ENCODE measurements at regions of chr2 and their contacts with region 1.

Region 1: DNA sequence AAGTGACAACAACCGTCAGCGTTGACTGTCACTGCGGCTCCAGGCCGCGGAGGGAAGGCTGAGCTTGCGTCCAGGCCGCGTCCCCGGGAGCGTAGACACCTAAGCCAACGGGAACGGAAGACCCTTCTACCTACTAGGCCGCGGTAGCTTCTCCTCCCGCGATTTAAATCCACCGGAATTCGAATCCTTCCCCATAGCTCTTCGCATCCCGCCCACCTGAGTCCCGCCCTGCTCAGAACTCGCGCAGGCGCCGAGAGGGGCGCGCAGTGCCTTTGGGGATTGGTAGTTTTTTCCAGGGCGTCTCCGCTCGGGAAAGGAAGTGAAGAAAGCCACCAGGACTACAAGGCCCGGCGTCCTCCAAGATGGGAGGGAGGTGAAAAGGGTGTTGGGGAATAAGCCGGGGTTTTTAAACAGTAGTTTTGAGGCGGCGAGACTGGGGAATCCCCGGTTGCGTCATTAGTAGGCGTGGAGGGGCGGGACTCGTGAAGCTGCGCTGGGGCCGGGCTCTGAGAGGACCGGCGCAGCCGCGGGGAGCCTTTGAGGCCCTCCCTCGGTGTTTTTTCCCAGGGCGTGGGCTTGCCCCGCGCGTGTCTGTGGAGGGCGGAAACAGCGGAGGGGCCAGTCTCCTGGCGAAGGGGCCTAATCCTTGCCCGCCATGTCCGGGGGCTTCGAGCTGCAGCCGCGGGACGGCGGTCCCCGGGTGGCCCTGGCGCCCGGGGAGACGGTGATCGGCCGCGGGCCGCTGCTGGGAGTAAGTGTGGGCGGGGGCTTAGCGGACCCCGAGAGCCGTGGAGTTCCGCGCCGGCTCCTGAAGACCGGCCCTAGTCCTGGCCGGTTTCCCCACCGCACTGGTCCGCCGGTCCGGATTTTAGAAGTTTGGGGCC is at the starts of genes APLF and FBXO48:
- DNase-seq: peak; percentile 99
- ATAC-seq: peak; percentile 93
- H3K4me3 Mint-ChIP-seq: peak within 1 kb of the TSS; percentile 93
- H3K27ac Mint-ChIP-seq: peak within 1 kb of the TSS; percentile 93
- H3K4me1 Mint-ChIP-seq: peaks cover 45% of the 10 kb centered on the region
- H3K27me3 Mint-ChIP-seq: no peaks in the 10 kb centered on the region
- total RNA-seq, gene APLF: 2.5 to 4.3 TPM
- total RNA-seq, gene FBXO48: 2.0 to 2.4 TPM

Region 2: GRCh38 chr2:68157402-68158133 is 309.8 kb before region 1 on chr2 and contains the start of gene PNO1:
- CTCF ChIA-PET with region 1: no interaction called
- POLR2A ChIA-PET with region 1: no interaction called
- intact Hi-C with region 1: loop called in 1 of 2 experiments (anchors 1 kb)
- DNase-seq: peak; percentile 98
- ATAC-seq: peak; percentile 93
- H3K4me3 Mint-ChIP-seq: peak within 1 kb of the TSS; percentile 97
- H3K27ac Mint-ChIP-seq: peak within 1 kb of the TSS; percentile 100
- H3K4me1 Mint-ChIP-seq: peaks cover 51% of the 10 kb centered on the region
- H3K27me3 Mint-ChIP-seq: no peaks in the 10 kb centered on the region
- total RNA-seq, gene PNO1: 15.7 to 20.5 TPM

Region 3: DNA sequence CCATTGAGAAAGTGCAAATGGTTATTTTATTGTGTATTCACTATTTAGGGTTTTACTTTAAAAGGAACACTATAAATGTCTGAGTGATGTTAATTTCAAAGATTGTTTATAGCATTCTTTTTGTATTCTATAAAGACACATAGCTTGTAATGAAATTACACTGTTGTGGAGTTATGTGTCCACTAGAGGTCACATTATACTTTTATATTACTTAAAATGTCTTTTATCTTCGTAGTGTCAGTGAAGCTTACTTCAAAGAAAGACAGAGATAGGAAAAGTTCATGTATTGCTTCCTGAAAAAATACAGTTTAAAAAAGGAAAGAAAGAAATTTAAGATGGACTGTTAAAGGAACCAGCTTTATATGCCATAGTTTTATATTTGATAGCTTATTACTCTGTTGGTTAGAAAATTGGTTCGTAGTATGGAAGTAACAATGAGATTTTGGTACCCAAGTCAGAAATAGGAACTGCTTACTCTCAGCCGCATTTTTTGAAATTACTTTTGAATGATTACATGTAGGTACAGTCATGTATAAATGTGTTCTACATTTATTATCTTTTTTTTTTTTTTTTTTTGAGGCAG is 20.5 kb after region 1 on chr2:
- CTCF ChIA-PET with region 1: interaction called, 37 read pairs
- POLR2A ChIA-PET with region 1: no interaction called
- intact Hi-C with region 1: loop called in 1 of 2 experiments (anchors 2 kb)
- DNase-seq: no peak
- ATAC-seq: no peak
- H3K4me3 Mint-ChIP-seq: no peak overlapping the region
- H3K27ac Mint-ChIP-seq: no peak overlapping the region
- H3K4me1 Mint-ChIP-seq: peaks cover 3% of the 10 kb centered on the region
- H3K27me3 Mint-ChIP-seq: no peaks in the 10 kb centered on the region

Region 4: GRCh38 chr2:68709421-68709911 is 242.1 kb after region 1 on chr2:
- CTCF ChIA-PET with region 1: interaction called, 22 read pairs
- POLR2A ChIA-PET with region 1: no interaction called
- intact Hi-C with region 1: loop called in 1 of 2 experiments (anchors 2 kb)
- DNase-seq: peak; percentile 34
- ATAC-seq: peak; percentile 89
- H3K4me3 Mint-ChIP-seq: no peak overlapping the region
- H3K27ac Mint-ChIP-seq: peak overlapping the region; percentile 56
- H3K4me1 Mint-ChIP-seq: peaks cover 25% of the 10 kb centered on the region
- H3K27me3 Mint-ChIP-seq: no peaks in the 10 kb centered on the region

Region 5: DNA sequence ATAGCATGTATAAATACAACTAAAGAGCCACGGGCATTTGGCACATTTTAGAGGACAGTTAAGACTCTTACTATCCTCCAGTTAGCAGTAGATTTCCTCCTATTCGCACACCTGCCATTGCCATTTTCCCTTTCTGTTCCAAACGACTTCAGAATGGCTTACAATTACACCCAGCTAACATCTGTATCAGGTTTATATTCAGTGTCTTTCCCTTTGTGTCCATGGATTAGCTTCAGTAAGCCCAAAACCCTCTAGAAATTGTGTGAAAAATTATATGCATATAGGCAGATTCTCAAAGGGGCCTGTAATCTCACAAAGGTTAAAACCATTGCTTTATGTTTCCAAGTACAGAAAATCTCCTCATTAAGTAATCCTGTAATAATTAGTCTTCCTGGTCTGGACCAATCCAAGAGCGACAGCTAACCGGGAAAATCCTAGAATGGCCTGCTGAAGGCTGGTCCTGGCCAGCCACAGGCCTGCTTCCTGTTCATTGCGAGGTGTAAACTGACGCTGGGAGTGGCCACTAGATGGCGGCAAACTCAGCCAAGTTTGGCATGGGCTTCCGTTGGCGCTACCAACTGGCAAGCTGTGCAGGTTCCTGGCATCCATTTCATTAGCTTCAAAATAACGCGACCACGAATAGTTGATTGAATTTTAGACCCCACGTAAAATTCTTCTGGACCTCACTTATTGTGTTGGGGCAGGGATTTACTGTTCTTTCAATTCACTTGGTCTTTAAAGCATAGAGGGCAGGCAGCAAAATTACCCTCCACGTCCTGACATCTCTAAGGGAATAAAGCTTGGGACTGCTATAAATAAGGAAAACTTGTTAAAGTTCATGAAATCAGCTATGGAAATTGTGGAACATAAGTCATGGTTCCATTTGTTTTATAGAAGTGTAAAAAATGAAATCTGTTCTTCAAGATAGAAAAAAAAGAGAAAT is 284.3 kb after region 1 on chr2:
- CTCF ChIA-PET with region 1: interaction called, 11 read pairs
- POLR2A ChIA-PET with region 1: no interaction called
- intact Hi-C with region 1: no loop called
- DNase-seq: peak; percentile 96
- ATAC-seq: peak; percentile 93
- H3K4me3 Mint-ChIP-seq: peak overlapping the region; percentile 20
- H3K27ac Mint-ChIP-seq: peak overlapping the region; percentile 84
- H3K4me1 Mint-ChIP-seq: peaks cover 87% of the 10 kb centered on the region
- H3K27me3 Mint-ChIP-seq: no peaks in the 10 kb centered on the region

Region 6: DNA sequence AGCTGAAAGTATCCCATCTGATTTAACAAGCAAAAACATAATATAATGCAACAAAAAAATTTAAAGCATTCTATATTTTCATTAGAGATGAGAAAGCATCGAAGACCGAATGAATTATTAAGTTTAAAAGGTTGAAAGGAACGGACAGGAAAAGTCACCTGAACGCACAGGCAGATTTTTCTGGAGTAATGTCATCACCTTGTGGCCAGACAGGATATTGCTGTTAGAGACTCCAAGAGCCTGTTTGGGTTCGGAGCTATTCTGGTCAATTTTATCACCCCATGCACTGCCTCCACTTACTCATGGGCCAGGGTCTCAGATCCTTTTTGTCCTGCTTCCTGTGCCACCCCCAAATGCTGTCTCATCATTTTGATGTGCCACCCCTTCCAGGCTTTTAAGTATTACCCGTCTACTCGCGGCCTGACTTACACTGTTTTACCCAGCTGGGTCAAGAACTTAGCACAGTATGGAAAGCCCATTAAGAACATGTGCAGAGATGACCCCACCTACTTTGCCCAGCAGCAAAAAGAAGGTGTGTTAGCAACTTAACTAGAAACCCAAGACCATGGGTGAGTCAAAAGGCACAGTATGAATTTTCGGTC is 458.1 kb after region 1 on chr2:
- CTCF ChIA-PET with region 1: interaction called, 45 read pairs
- POLR2A ChIA-PET with region 1: no interaction called
- intact Hi-C with region 1: loop called (anchors 1 kb)
- DNase-seq: peak; percentile 63
- ATAC-seq: peak; percentile 75
- H3K4me3 Mint-ChIP-seq: no peak overlapping the region
- H3K27ac Mint-ChIP-seq: no peak overlapping the region
- H3K4me1 Mint-ChIP-seq: peaks cover 4% of the 10 kb centered on the region
- H3K27me3 Mint-ChIP-seq: peaks cover 2% of the 10 kb centered on the region

Region 7: GRCh38 chr2:69436938-69437750 is 969.8 kb after region 1 on chr2 and contains the start of gene NFU1:
- CTCF ChIA-PET with region 1: no interaction called
- POLR2A ChIA-PET with region 1: no interaction called
- intact Hi-C with region 1: loop called in 1 of 2 experiments (anchors 2 kb)
- DNase-seq: peak; percentile 94
- ATAC-seq: peak; percentile 93
- H3K4me3 Mint-ChIP-seq: peak within 1 kb of the TSS; percentile 93
- H3K27ac Mint-ChIP-seq: peak within 1 kb of the TSS; percentile 95
- H3K4me1 Mint-ChIP-seq: peaks cover 25% of the 10 kb centered on the region
- H3K27me3 Mint-ChIP-seq: no peaks in the 10 kb centered on the region
- total RNA-seq, gene NFU1: 30.0 to 34.3 TPM